HCT116 (cell line): ENCODE measurements at regions of chr11 and their contacts with region 1.

Region 1: DNA sequence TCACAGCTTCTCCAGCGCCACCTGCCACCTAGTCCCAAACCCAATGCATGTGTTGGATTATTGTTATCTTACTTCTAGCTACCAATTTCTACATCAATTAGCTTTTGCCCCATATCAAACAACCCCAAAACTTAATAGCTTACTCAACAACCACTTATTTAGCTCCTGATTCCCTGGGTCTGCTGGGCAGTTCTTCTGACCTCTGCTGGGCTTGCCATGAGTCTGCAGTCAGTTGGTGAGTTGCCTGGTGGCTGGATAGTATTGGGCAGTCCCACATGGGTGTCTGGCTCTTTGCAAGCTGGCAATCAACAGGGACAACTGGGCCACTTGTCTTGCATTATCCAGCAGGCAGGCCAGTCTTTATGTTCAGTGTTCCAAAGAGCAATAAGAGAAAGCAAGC is 13.6 kb upstream of the MS4A15 start:
- DNase-seq: no peak
- ATAC-seq: peak; percentile 63; the same call in 1 of the 2 replicates
- H3K4me3 ChIP-seq: no peak overlapping the region
- H3K27ac ChIP-seq: no peak overlapping the region
- H3K4me1 ChIP-seq: no peaks in the 10 kb centered on the region
- H3K27me3 ChIP-seq: peaks cover 4% of the 10 kb centered on the region; the same call in 1 of the 2 replicates
- CTCF ChIP-seq: peak in 1 of 3 experiments; percentile 24; a peak in 1 of 6 replicates
- POLR2A ChIP-seq: no peak
- RAD21 ChIP-seq: 0 out of 2 replicates have a peak, but pooled peaks have one; percentile 7

Region 2: GRCh38 chr11:60705906-60706305 is 37.2 kb before region 1 on chr11:
- CTCF ChIA-PET with region 1: no interaction called
- POLR2A ChIA-PET with region 1: no interaction called
- RAD21 ChIA-PET with region 1: no interaction called
- intact Hi-C with region 1: loop called (anchors 5 kb)
- DNase-seq: no peak
- ATAC-seq: no peak
- H3K4me3 ChIP-seq: no peak overlapping the region
- H3K27ac ChIP-seq: no peak overlapping the region
- H3K4me1 ChIP-seq: no peaks in the 10 kb centered on the region; a peak in 1 of 4 replicates
- H3K27me3 ChIP-seq: no peaks in the 10 kb centered on the region
- CTCF ChIP-seq: no peak
- POLR2A ChIP-seq: no peak
- RAD21 ChIP-seq: no peak

Region 3: GRCh38 chr11:60731586-60731985 is 11.5 kb before region 1 on chr11:
- CTCF ChIA-PET with region 1: no interaction called
- POLR2A ChIA-PET with region 1: no interaction called
- RAD21 ChIA-PET with region 1: no interaction called
- intact Hi-C with region 1: no loop called
- DNase-seq: no peak
- ATAC-seq: no peak
- H3K4me3 ChIP-seq: no peak overlapping the region
- H3K27ac ChIP-seq: no peak overlapping the region
- H3K4me1 ChIP-seq: no peaks in the 10 kb centered on the region
- H3K27me3 ChIP-seq: peaks cover 25% of the 10 kb centered on the region
- CTCF ChIP-seq: no peak
- POLR2A ChIP-seq: no peak
- RAD21 ChIP-seq: no peak